ENCODE measurements at regions of chr10 and their contacts with region 1.

Region 1: GRCh38 chr10:89563861-89564478 is 28.6 kb upstream of the SLC16A12 start:
- DNase-seq: no peak
- H3K4me3 ChIP-seq: no peak overlapping the region
- H3K27ac ChIP-seq: no peak overlapping the region
- H3K4me1 ChIP-seq: no peaks in the 10 kb centered on the region
- H3K27me3 ChIP-seq: no peaks in the 10 kb centered on the region
- CTCF ChIP-seq: peak; percentile 69 to 86 (median 76)
- EP300 ChIP-seq: no peak
- POLR2A ChIP-seq: no peak

Region 2: GRCh38 chr10:89251409-89252224 is 312.4 kb before region 1 on chr10 and contains the start of gene LIPA:
- in situ Hi-C with region 1: loop called in 2 of 4 experiments (anchors 5 to 10 kb)
- intact Hi-C with region 1: no loop called
- DNase-seq: peak; percentile 94
- H3K4me3 ChIP-seq: peak within 1 kb of the TSS; percentile 52 to 85 (median 78)
- H3K27ac ChIP-seq: peak within 1 kb of the TSS; percentile 77 to 84 (median 82)
- H3K4me1 ChIP-seq: peaks cover 0 to 13% (median 5%) of the 10 kb centered on the region in 4 donors
- H3K27me3 ChIP-seq: no peaks in the 10 kb centered on the region
- CTCF ChIP-seq: no peak
- EP300 ChIP-seq: no peak
- POLR2A ChIP-seq: peak; percentile 61
- total RNA-seq, gene LIPA: 3.6 to 23.8 (median 12.1) TPM

Region 3: DNA sequence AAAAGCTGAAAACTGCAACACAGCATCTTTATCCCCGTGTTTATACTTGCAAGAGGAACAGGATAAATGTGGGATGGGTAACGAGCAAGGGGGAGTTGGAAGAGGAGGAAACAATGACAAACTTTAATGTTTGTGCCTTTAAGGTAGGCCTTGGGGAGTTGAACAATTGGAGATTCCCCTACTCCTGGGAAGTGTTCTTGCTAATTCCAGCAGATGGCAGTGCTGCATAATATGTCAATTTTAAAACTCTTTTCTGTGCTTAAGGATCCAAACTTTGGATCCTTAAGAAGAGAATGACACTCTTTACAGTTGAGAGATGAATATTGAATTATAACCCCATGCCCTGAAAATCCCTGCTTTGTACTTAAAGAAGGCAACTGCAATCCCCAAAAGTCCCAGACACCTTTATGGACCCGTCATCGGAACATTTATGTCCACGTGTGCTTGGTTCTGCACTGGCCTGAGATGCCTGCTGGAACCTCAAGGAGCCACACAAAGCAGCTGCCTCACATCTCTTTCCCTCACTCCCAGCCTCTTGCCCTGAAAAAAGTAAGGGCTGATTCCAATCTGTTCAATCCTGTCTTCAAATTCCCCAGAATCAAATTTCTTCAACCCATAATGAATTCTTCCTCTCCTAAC is 137.6 kb before region 1 on chr10:
- in situ Hi-C with region 1: loop called (anchors 5 to 10 kb)
- intact Hi-C with region 1: loop called (anchors 5 kb)
- DNase-seq: no peak
- H3K4me3 ChIP-seq: no peak overlapping the region
- H3K27ac ChIP-seq: no peak overlapping the region
- H3K4me1 ChIP-seq: no peaks in the 10 kb centered on the region
- H3K27me3 ChIP-seq: no peaks in the 10 kb centered on the region
- CTCF ChIP-seq: peak; percentile 65 to 78 (median 72)
- EP300 ChIP-seq: no peak
- POLR2A ChIP-seq: no peak

Region 4: GRCh38 chr10:89431977-89432376 is 132.0 kb before region 1 on chr10:
- in situ Hi-C with region 1: loop called (anchors 5 to 10 kb)
- intact Hi-C with region 1: loop called (anchors 5 kb)
- DNase-seq: no peak
- H3K4me3 ChIP-seq: no peak overlapping the region
- H3K27ac ChIP-seq: no peak overlapping the region
- H3K4me1 ChIP-seq: no peaks in the 10 kb centered on the region
- H3K27me3 ChIP-seq: no peaks in the 10 kb centered on the region
- CTCF ChIP-seq: no peak
- EP300 ChIP-seq: no peak
- POLR2A ChIP-seq: no peak

Region 5: GRCh38 chr10:89466599-89467035 is 97.4 kb before region 1 on chr10:
- in situ Hi-C with region 1: no loop called
- intact Hi-C with region 1: no loop called
- DNase-seq: no peak
- H3K4me3 ChIP-seq: no peak overlapping the region
- H3K27ac ChIP-seq: no peak overlapping the region
- H3K4me1 ChIP-seq: no peaks in the 10 kb centered on the region
- H3K27me3 ChIP-seq: no peaks in the 10 kb centered on the region
- CTCF ChIP-seq: peak in 2 of 5 experiments; percentile 12 to 26
- EP300 ChIP-seq: no peak
- POLR2A ChIP-seq: no peak

Measured in transverse colon (tissue), 4 donors.